Mammary epithelial cell (primary cell): ENCODE measurements at regions of chr9 and their contacts with region 1.

Region 1: DNA sequence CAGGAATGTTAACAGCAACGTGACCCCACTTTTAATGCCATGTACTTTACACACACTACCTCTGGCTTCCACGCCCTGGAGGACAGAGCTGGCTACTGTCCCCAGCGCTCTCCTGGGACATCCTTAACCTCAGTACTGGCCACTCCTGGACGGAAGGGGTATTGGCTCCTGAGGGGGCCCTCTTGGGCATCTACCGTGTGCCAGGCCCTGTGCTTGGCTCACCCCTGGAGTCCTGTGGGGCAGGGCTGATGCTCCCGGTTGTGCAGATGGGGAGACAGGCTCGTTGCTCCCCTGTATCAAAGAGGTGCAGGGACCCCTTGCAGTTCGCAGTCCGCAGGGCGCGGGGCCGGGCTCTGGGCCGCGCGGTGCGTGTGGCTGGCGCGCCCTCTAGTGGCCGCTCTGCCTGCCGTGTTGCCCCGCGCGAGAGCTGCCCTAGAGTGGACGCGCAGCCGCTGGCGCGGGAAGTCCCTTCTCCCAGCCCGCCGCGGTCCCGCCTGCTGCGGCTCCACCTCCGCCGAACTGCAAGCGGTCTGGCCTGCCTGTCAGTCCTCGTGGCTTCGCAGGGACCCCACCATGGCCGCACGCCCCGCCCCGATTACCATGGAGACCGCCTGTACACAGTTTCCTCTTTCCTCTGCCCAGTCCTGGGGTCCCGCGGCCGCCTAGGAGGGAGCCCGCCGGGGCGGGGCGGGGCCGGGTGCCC is at the start of gene WDR38:
- DNase-seq: peak; percentile 70
- H3K4me3 ChIP-seq: peak within 1 kb of the TSS; percentile 34 to 65 (median 55)
- H3K27ac ChIP-seq: no peak within 1 kb of the TSS
- H3K4me1 ChIP-seq: peaks cover 19% of the 10 kb centered on the region
- H3K27me3 ChIP-seq: no peaks in the 10 kb centered on the region
- CTCF ChIP-seq: peak; percentile 49 to 80
- total RNA-seq, gene WDR38: not detected

Region 2: DNA sequence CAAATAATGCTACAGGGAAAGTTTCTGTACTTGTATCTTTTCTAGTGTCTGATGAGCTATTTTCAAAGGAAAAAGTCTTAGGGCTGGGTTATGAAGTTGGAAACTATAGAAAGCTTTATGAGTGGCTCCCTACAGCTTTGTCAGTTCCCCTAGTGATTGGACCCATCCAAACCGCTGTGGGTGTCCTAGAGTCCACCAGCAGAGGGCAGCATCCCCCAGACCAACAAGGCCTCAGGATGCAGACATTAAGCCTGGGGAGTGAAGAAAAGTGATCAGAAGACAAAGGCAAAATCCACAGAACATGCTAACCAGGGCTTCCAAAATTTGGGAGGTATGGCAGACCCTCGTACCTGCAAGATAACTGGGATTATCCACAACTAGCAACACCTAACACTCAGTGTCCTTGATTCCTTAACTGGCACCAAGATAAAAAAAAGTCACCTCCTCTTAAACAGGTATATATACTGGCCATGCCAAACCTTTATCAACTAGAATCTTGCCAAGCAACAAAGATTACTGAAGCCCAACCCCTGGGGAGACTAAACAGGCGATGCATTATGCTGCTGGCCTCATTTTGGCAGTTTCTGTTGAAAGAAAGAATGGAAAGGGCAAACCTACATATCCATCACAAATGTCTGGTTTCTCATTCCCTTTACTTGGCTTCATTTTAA is 235.4 kb before region 1 on chr9:
- CTCF ChIA-PET with region 1: no interaction called
- dilution Hi-C with region 1: no loop called
- in situ Hi-C with region 1: no loop called
- intact Hi-C with region 1: loop called (anchors 2 kb)
- DNase-seq: peak; percentile 57
- H3K4me3 ChIP-seq: no peak overlapping the region
- H3K27ac ChIP-seq: no peak overlapping the region
- H3K4me1 ChIP-seq: peaks cover 9% of the 10 kb centered on the region
- H3K27me3 ChIP-seq: no peaks in the 10 kb centered on the region
- CTCF ChIP-seq: peak; percentile 94 to 96

Region 3: GRCh38 chr9:124771021-124771866 is 81.7 kb before region 1 on chr9 and contains the start of gene NR6A1:
- CTCF ChIA-PET with region 1: interaction called, 23 read pairs
- dilution Hi-C with region 1: loop called (anchors 5 kb)
- in situ Hi-C with region 1: loop called (anchors 5 kb)
- intact Hi-C with region 1: loop called (anchors 1 kb)
- DNase-seq: peak; percentile 95
- H3K4me3 ChIP-seq: peak within 1 kb of the TSS; percentile 80 to 96 (median 85)
- H3K27ac ChIP-seq: peak within 1 kb of the TSS; percentile 87
- H3K4me1 ChIP-seq: peaks cover 10% of the 10 kb centered on the region
- H3K27me3 ChIP-seq: no peaks in the 10 kb centered on the region
- CTCF ChIP-seq: peak in 1 of 2 donors; percentile 42
- total RNA-seq, gene NR6A1: 3.2 to 4.8 TPM

Region 4: DNA sequence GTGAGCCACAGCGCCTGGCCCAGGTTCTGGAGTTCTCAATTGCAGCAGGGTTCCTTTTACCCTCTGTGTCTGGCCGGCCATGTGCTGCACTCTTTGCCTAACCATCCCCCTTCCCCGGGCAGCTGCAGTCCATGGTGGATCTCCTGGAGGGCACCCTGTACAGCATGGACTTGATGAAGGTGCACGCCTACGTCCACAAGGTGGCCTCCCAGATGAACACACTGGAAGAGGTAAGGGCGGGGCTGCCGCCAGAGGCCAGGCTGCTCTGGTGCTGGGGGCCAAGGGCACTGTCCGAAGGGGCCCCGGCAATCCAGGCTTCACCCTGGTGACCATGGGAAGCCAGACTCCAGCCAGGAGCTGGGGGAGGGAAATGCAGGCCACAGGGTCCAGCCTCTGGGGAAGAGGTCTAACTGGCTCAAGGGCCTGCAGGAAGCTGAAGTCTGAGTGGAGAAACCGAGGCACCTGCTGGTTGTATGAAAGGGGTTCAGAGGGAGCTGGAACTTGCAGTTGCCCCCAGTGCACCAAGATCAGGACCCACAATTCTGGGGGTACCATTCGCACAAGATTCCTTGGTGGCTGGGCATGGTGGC is 58.0 kb before region 1 on chr9:
- CTCF ChIA-PET with region 1: interaction called, 5 read pairs
- dilution Hi-C with region 1: no loop called
- in situ Hi-C with region 1: no loop called
- intact Hi-C with region 1: loop called (anchors 1 kb)
- DNase-seq: no peak
- H3K4me3 ChIP-seq: no peak overlapping the region
- H3K27ac ChIP-seq: no peak overlapping the region
- H3K4me1 ChIP-seq: no peaks in the 10 kb centered on the region
- H3K27me3 ChIP-seq: no peaks in the 10 kb centered on the region
- CTCF ChIP-seq: peak in 1 of 2 donors; percentile 40

Region 5: DNA sequence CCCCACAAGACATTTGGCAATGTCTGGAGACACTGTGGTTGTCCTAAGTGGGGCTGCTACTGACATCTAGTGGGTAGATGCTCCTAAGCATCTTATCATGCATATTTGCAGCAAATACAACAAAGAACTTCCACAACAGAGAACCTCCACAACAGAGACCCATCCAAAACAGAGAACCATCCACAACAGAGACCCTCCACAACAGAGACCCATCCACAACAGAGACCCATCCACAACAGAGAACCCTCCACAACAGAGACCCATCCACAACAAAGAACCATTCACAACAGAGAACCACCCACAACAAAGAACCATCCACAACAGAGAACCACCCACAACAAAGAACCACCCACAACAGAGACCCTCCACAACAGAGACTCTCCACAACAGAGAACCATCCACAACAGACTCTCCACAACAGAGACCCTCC is 41.8 kb after region 1 on chr9:
- CTCF ChIA-PET with region 1: interaction called, 3 read pairs
- dilution Hi-C with region 1: no loop called
- in situ Hi-C with region 1: no loop called
- intact Hi-C with region 1: loop called (anchors 1 kb)
- DNase-seq: peak; percentile 24
- H3K4me3 ChIP-seq: no peak overlapping the region
- H3K27ac ChIP-seq: no peak overlapping the region
- H3K4me1 ChIP-seq: peaks cover 7% of the 10 kb centered on the region
- H3K27me3 ChIP-seq: no peaks in the 10 kb centered on the region
- CTCF ChIP-seq: peak; percentile 40 to 64

Region 6: GRCh38 chr9:124960409-124960752 is 107.4 kb after region 1 on chr9:
- CTCF ChIA-PET with region 1: no interaction called
- dilution Hi-C with region 1: no loop called
- in situ Hi-C with region 1: no loop called
- intact Hi-C with region 1: no loop called
- DNase-seq: peak; percentile 15
- H3K4me3 ChIP-seq: no peak overlapping the region
- H3K27ac ChIP-seq: no peak overlapping the region
- H3K4me1 ChIP-seq: no peaks in the 10 kb centered on the region
- H3K27me3 ChIP-seq: no peaks in the 10 kb centered on the region
- CTCF ChIP-seq: no peak

Region 7: DNA sequence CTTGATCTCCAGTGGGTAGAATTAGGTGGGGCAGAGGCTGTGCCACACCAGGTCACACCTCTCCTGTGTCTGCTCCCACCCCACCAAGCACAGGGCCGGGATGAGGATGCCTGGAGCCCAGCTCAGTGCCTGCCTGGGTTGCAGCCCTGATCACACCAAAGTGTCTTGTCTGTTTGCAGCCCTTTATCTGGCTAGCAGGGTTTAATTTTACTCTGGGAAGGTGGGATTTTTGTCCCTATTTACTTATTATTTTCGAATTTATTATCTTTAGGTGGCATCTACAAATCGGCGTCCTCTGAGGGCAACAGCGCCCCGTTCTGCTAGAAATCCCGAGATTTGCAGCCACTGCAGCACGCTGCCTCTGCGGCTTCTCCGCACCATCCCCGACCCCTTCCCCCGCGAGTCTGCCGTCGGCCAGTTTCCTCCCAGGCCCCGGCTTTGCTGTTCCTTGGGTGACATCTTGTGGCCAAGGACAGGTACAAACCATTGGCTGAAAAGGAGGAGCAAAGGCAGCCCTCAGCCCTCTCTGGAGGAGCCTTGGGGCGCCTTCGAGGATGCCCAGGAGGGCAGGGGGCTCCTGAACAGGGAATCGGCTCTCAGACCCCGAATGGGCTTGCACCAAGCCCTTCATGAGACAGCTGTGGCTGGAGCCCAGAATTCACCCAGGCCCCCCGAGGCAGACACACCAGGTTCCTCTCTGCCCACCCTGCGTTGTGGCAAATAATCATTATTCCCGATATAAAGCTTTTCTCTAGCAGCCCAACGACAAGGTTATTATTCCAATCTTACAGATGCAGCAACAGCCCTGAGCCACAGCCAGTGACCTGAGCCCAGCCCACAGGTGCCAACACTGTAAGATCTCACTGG is 521.7 kb after region 1 on chr9:
- CTCF ChIA-PET with region 1: no interaction called
- dilution Hi-C with region 1: no loop called
- in situ Hi-C with region 1: no loop called
- intact Hi-C with region 1: loop called (anchors 2 kb)
- DNase-seq: peak; percentile 37
- H3K4me3 ChIP-seq: peak overlapping the region; percentile 18 to 50 (median 35)
- H3K27ac ChIP-seq: no peak overlapping the region
- H3K4me1 ChIP-seq: no peaks in the 10 kb centered on the region
- H3K27me3 ChIP-seq: no peaks in the 10 kb centered on the region
- CTCF ChIP-seq: peak; percentile 59 to 86